Mammary epithelial cell (primary cell): ENCODE measurements at regions of chr13 and their contacts with region 1.

Region 1: GRCh38 chr13:102596147-102597028 is at the start of gene TPP2:
- DNase-seq: peak; percentile 98
- H3K4me3 ChIP-seq: peak within 1 kb of the TSS; percentile 81 to 97 (median 91)
- H3K27ac ChIP-seq: peak within 1 kb of the TSS; percentile 94
- H3K4me1 ChIP-seq: peaks cover 24% of the 10 kb centered on the region
- H3K27me3 ChIP-seq: no peaks in the 10 kb centered on the region
- CTCF ChIP-seq: no peak
- total RNA-seq, gene TPP2: 42.8 to 46.5 TPM

Region 2: DNA sequence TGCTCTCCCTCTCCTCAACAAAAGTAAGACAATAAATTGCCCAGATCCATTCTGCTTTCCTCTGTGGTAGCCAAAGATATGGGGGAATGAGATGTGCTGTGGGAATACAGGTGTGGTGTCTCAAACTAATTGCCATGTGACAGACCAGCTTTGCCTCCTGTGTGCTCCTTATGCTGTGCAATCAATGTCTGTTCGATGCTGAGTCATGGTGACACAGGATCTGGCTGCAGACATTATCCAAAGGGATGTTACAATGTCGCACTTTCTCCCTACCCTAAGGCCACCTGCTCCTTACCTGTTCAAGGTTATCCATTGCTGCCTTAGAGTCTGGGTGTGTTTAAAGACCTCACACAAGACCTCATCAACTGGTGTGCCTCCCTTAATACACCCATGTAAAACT is 227.1 kb before region 1 on chr13:
- CTCF ChIA-PET with region 1: no interaction called
- dilution Hi-C with region 1: no loop called
- in situ Hi-C with region 1: no loop called
- intact Hi-C with region 1: no loop called
- DNase-seq: no peak
- H3K4me3 ChIP-seq: no peak overlapping the region
- H3K27ac ChIP-seq: no peak overlapping the region
- H3K4me1 ChIP-seq: peaks cover 8% of the 10 kb centered on the region
- H3K27me3 ChIP-seq: no peaks in the 10 kb centered on the region
- CTCF ChIP-seq: no peak

Region 3: DNA sequence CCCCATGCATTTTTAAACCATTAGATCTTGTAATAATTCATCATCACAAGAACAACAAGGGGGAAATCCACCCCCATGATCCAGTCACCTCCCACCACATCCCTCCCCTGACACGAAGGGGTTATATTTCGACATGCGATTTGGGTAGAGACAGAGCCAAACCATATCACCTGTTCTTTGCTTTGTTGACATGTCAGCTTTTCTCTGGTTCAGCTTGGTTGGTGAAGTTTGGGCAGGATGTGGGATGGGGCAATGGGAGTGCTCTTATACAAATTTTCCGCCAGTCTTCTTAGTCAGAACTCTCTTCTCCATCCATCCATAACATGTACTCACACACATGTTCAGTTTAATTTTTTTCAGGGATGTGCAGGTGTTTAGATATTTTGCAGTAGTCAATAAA is 13.3 kb after region 1 on chr13:
- CTCF ChIA-PET with region 1: no interaction called
- dilution Hi-C with region 1: no loop called
- in situ Hi-C with region 1: no loop called
- intact Hi-C with region 1: loop called (anchors 1 kb)
- DNase-seq: no peak
- H3K4me3 ChIP-seq: no peak overlapping the region
- H3K27ac ChIP-seq: no peak overlapping the region
- H3K4me1 ChIP-seq: peaks cover 12% of the 10 kb centered on the region
- H3K27me3 ChIP-seq: no peaks in the 10 kb centered on the region
- CTCF ChIP-seq: no peak